ENCODE measurements at regions of chr11 and their contacts with region 1.

Region 1: DNA sequence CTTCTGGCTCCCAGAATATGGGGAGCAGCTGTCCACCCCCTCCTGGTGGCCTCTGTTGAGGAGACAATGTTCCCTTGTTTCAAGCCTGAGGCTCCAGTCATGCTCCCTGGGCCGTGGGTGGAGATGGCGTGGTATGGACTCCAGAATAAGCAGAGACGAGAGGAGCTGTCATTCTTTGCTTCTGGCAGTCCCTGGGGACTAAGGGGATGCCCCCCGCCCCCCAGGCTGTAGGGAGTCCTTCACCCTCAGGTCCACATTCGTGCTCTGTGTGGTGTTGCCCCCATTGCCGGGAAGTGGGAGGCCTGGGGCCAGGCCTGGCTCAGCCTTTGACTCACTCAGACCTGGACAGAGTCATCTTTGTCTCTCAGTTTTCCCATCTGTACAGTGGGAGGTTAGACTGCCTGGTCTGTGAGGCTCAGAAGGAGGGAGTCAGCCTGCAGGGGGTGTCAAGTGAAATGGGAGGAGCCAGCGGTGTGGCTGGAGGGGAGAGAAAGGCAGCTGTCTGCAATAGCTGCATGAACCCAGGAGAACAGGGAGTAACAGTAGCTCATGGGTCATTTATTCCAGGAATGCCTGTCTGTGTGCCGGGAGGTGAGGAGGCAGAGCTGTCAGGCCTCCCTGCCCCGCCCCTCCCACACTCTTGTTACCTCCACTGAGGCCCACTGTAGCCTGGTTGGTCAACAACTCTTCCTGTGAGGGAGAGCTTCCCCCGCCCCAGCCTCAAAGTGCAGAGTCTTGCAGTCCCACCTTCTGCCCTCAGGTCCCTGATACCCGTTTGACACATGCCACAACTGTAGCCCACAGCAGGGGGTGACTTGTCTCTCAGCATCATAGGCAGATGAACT is 6.3 kb downstream of the ARHGEF17 start:
- DNase-seq: peak; percentile 33
- H3K4me3 ChIP-seq: no peak overlapping the region
- H3K27ac ChIP-seq: peak overlapping the region; percentile 36
- H3K4me1 ChIP-seq: peaks cover 55% of the 10 kb centered on the region
- H3K27me3 ChIP-seq: no peaks in the 10 kb centered on the region
- CTCF ChIP-seq: no peak

Region 2: GRCh38 chr11:72864702-72865655 is 449.4 kb before region 1 on chr11:
- CTCF ChIA-PET with region 1: no interaction called
- dilution Hi-C with region 1: no loop called
- in situ Hi-C with region 1: no loop called
- intact Hi-C with region 1: no loop called
- DNase-seq: no peak
- H3K4me3 ChIP-seq: no peak overlapping the region
- H3K27ac ChIP-seq: no peak overlapping the region
- H3K4me1 ChIP-seq: no peaks in the 10 kb centered on the region
- H3K27me3 ChIP-seq: no peaks in the 10 kb centered on the region
- CTCF ChIP-seq: no peak

Region 3: DNA sequence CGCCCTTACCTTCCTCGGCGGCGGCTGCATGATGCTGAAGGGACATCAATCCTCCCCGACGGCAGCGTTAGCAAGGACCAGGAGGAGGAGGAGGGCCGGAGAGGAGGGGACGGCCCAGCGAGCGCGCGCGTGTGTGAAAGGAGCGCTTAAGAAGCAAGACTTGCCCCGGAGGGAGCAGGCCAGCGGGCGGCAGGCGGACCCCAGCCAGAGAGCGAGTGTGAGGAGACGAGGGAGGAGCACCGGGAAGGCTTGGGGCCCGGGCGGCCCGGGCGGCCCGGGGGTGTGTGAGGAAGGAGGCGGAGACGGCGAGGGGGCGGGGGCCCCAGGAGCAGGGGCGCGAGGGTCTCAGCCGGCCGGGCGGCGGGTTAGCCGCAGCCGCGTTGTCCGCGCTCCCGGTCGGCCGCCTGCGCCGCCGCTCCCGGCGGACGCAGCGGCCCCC is 172.5 kb before region 1 on chr11:
- CTCF ChIA-PET with region 1: no interaction called
- dilution Hi-C with region 1: no loop called
- in situ Hi-C with region 1: no loop called
- intact Hi-C with region 1: no loop called
- DNase-seq: peak; percentile 64
- H3K4me3 ChIP-seq: peak overlapping the region; percentile 92 to 99 (median 98)
- H3K27ac ChIP-seq: peak overlapping the region; percentile 49
- H3K4me1 ChIP-seq: peaks cover 20% of the 10 kb centered on the region
- H3K27me3 ChIP-seq: no peaks in the 10 kb centered on the region
- CTCF ChIP-seq: no peak

Region 4: GRCh38 chr11:73185680-73186293 is 128.6 kb before region 1 on chr11:
- CTCF ChIA-PET with region 1: no interaction called
- dilution Hi-C with region 1: no loop called
- in situ Hi-C with region 1: no loop called
- intact Hi-C with region 1: no loop called
- DNase-seq: peak; percentile 96
- H3K4me3 ChIP-seq: peak overlapping the region in 2 of 3 experiments; percentile 3 to 15
- H3K27ac ChIP-seq: peak overlapping the region; percentile 60
- H3K4me1 ChIP-seq: peaks cover 39% of the 10 kb centered on the region
- H3K27me3 ChIP-seq: no peaks in the 10 kb centered on the region
- CTCF ChIP-seq: no peak

Region 5: GRCh38 chr11:73342633-73343032 is 28.3 kb after region 1 on chr11:
- CTCF ChIA-PET with region 1: no interaction called
- dilution Hi-C with region 1: no loop called
- in situ Hi-C with region 1: no loop called
- intact Hi-C with region 1: no loop called
- DNase-seq: no peak
- H3K4me3 ChIP-seq: no peak overlapping the region
- H3K27ac ChIP-seq: no peak overlapping the region
- H3K4me1 ChIP-seq: peaks cover 8% of the 10 kb centered on the region
- H3K27me3 ChIP-seq: no peaks in the 10 kb centered on the region
- CTCF ChIP-seq: no peak

Region 6: DNA sequence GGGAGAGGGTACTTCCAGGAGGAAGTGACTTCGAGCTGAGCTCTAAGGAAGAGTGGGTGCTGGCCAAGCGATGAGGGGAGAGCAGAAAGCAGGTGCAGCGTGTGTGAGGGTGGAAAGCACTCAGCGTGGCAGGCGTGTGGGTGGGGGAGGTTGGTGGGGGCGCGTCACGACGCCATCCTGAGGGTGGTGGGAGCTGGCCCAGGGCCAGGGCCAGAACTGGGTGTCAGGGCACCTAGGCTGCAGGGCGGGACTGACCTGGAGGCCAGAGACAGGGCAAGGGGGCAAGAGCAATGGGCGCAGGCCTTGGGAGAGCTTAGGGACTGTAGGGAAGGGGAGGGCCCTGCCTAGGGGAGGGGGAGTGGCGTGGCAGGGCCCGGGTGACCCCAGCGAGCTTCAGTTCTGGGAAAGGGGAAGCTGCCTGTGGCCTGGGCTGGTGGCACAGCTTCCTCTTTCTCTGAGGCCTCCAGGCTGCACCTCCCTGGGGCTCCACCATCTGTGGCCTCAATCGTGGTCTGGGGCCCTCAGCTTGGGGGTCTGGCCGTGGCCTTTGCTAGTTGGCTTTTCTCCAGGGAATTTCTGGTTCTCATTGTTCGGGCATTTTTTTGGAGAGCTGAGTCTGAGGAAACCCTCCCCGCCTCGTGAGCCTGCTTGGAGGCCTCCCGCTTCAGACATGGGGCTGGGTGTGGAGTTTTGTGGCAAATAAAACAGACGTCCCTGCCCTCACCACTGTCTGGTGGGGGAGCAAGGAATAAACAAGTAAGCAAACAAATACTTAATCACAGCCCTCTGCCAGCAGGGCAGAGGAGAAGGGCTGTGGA is 70.7 kb after region 1 on chr11:
- CTCF ChIA-PET with region 1: no interaction called
- dilution Hi-C with region 1: loop called (anchors 5 kb)
- in situ Hi-C with region 1: no loop called
- intact Hi-C with region 1: no loop called
- DNase-seq: no peak
- H3K4me3 ChIP-seq: no peak overlapping the region
- H3K27ac ChIP-seq: no peak overlapping the region
- H3K4me1 ChIP-seq: peaks cover 18% of the 10 kb centered on the region
- H3K27me3 ChIP-seq: no peaks in the 10 kb centered on the region
- CTCF ChIP-seq: no peak

Measured in mammary epithelial cell (primary cell).